ENCODE measurements at regions of chr9 and their contacts with region 1.

Region 1: DNA sequence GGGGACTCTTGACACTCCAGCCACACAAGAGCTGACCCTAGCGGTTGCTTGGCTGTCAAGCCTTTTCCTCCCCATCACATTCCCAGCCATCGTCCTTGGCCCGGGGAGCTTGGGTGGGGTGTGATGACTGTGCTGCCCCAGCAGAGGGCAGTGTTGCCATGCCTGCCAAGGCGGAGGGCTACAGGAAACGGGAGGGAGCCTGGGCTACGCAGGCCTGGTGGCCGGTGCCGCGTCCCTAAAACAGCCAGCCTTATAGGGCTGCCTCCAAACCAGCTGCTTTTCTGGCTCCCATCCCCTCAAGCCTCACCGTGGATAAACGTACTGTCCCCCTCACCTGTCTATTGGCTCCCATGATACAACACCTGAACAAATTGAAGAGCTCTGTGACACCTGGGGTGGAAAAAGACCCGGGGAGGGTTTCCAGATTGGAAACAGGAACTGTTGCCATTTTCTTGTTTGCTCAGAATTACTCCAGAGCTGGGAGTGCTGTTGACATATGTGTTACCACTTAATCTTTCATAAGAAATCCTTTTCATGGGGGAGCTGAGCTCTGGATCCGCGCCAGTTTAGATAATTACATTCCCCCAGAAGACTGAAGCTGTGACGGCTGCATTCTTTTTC is 72.8 kb upstream of the ASTN2 start:
- DNase-seq: peak; percentile 60 to 97 (median 78)

Region 2: GRCh38 chr9:117555964-117556629 is 68.4 kb after region 1 on chr9:
- intact Hi-C with region 1: loop called (anchors 2 kb)
- DNase-seq: peak in 7 of 10 donors; percentile 21 to 90 (median 64)

Region 3: GRCh38 chr9:117644133-117644931 is 156.7 kb after region 1 on chr9:
- intact Hi-C with region 1: loop called (anchors 10 kb)
- DNase-seq: peak; percentile 63 to 96 (median 83)